Caco-2 (cell line): ENCODE measurements at regions of chr15 and their contacts with region 1.

Region 1: DNA sequence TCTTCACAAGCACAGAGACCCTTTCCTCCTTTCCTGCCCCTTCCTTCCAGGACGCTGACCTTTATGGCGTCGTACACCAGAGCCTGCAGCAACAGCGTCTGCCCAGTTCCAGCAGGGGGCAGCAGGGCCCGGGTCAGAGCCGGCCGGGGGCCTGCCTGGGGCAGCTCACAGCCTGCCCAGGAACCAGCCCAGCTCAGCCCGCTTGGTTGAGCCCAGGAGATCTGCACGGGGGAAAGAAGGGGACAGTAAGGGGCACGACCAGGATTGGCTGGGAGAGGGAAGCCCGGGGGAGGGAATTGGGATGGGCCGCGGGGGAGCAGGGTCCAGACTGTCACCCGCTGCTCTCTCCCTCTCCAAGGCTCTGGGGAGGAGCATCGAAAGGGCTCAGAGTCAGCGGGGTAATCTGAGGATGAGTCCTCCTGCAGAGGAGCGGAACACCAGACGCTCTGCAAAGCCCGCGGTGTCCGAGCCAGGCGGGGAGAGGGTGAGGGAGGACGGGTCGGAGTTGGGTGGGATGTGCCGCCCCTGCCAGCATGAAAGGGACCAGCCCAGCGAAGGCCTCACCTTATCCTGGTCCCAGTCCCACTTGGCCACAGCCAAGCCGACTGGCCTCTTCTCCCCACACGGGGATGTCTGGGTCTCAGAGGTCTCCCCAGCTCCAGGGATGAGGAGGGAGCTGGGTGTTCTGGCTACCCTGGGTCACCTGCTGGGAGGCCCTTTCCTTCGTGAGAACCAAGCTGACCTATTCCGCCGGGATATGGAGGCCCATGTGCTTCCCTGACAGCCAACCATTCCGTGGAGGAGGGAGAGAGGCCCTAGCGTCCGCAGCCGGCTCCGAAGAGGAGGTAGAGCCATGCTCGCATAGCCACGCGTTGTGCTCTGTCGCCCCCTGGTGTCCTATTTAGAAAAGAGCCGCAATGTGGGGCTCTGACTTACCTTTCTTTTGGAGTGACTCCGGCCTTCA is 7.4 kb upstream of the IGDCC3 start:
- DNase-seq: peak; percentile 85 to 90
- H3K4me3 ChIP-seq: peak overlapping the region; percentile 25
- H3K4me3 Mint-ChIP-seq: peak overlapping the region; percentile 72
- H3K27ac Mint-ChIP-seq: peak overlapping the region; percentile 83
- H3K4me1 ChIP-seq: peaks cover 13% of the 10 kb centered on the region
- H3K4me1 Mint-ChIP-seq: peaks cover 27% of the 10 kb centered on the region
- H3K27me3 ChIP-seq: no peaks in the 10 kb centered on the region
- H3K27me3 Mint-ChIP-seq: no peaks in the 10 kb centered on the region
- CTCF ChIP-seq: peak; percentile 80 to 87

Region 2: DNA sequence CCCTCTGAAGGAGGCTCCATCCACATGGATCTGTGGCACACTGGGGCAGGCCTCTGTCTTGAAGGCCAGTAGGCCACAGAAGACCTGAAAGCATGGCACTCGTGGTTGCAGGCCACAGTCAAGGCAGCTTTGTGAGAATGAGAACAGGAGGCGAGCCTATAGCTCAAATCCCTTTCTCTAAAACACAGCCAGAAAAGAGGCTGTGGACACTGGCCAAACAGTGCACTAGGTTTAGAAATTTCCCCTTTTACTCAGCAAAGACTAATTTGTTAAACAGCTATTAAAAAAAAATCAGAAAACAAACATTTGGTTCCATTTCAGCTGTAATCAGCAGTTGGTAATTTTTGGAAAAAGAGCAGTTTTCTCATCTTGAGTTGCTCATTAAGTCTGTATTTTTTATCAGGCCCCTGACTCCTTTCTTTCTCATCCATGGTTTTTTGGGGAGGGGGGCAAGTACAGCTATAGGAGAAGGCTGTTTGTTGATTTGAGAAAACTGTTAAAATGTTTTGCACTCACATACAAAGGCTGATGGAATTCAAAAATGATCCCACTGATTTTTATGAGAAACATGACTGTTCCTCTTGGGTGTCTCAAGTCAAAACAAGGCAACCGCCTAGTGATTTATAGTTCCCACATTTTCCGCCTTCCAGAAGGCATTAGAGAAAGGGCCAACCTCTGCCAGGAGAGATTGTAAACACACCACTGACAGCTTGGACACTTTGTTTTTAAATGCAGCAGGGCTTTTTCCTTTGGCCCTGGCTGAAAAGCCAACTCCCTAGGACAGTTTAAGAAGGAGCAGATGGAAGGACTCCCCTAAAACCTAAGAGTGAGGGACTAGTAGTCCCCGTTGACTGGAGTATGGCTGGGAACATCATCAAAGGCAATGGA is 126.6 kb before region 1 on chr15:
- CTCF ChIA-PET with region 1: no interaction called
- POLR2A ChIA-PET with region 1: no interaction called
- intact Hi-C with region 1: no loop called
- DNase-seq: no peak
- H3K4me3 ChIP-seq: no peak overlapping the region
- H3K4me3 Mint-ChIP-seq: no peak overlapping the region
- H3K27ac Mint-ChIP-seq: no peak overlapping the region
- H3K4me1 ChIP-seq: no peaks in the 10 kb centered on the region
- H3K4me1 Mint-ChIP-seq: no peaks in the 10 kb centered on the region
- H3K27me3 ChIP-seq: no peaks in the 10 kb centered on the region
- H3K27me3 Mint-ChIP-seq: no peaks in the 10 kb centered on the region
- CTCF ChIP-seq: no peak

Region 3: DNA sequence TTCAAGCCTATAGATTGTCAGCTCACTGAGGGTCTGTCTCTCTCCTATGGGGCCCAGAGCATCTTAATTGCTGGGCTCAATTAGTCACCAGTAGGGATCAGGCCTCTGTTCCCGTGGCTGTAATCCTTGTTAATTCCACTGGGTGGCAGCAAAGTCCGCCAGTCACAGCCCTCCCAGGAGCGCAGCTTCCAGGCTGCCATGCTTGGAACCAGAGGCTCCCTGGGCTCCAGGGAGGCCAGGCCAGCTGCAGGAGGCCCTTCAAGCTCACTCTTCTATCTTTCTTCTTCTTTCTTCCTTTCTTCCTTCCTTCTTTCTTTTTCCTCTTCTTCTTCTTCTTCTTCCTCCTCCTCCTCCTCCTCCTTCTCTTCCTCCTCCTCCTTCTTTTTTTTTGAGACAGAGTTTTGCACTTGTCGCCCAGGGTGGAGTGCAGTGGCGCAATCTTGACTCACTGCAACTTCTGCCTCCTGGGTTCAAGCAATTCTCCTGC is 66.3 kb before region 1 on chr15:
- CTCF ChIA-PET with region 1: interaction called, 23 read pairs
- POLR2A ChIA-PET with region 1: no interaction called
- intact Hi-C with region 1: loop called (anchors 1 kb)
- DNase-seq: peak; percentile 78 to 87
- H3K4me3 ChIP-seq: no peak overlapping the region
- H3K4me3 Mint-ChIP-seq: no peak overlapping the region
- H3K27ac Mint-ChIP-seq: no peak overlapping the region
- H3K4me1 ChIP-seq: no peaks in the 10 kb centered on the region
- H3K4me1 Mint-ChIP-seq: no peaks in the 10 kb centered on the region
- H3K27me3 ChIP-seq: no peaks in the 10 kb centered on the region
- H3K27me3 Mint-ChIP-seq: no peaks in the 10 kb centered on the region
- CTCF ChIP-seq: peak; percentile 71 to 91

Region 4: DNA sequence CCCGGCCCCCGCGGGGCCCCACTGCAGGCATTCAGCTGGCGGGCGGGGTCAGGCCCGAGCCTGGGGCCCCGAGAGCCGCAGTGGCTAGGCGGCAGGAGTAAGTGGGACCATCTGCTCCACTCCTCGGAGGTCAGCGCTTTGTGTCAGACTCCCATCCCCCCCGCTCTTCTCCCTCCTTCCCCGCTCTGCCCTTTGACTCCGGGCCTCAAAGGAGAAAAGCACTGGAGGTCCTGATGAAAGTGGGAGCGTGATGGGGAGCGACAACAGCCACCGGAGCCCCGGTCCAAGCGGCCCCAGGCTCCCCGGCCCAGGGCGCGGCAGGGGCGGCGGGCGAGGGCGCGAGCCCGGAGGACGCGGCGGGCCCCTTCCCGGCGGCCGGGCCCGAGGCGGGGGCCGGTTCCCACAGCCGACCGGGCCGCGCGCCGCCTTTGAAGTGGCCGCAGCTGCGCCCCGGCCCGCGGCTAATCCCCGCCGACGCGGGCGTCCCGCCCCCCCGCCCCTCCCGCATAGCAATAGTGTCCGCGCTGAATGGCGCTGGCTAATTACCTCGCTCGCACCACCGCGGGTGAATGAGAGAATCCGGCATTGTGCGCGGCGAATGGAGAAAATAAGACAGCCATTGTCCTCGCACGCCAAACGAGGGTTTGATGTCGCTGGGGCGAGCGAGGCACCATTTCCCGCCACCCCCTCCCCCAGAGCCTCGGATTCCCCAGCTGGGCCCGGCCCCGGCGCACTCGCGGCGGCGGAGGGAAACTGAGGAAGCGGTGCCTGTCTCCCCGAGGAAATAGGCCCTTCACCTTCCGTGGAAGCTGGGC is 29.8 kb before region 1 on chr15:
- CTCF ChIA-PET with region 1: no interaction called
- POLR2A ChIA-PET with region 1: no interaction called
- intact Hi-C with region 1: loop called (anchors 2 kb)
- DNase-seq: peak; percentile 74 to 77
- H3K4me3 ChIP-seq: peak overlapping the region; percentile 85
- H3K4me3 Mint-ChIP-seq: peak overlapping the region; percentile 75
- H3K27ac Mint-ChIP-seq: peak overlapping the region; percentile 86
- H3K4me1 ChIP-seq: peaks cover 20% of the 10 kb centered on the region
- H3K4me1 Mint-ChIP-seq: peaks cover 17% of the 10 kb centered on the region
- H3K27me3 ChIP-seq: no peaks in the 10 kb centered on the region
- H3K27me3 Mint-ChIP-seq: no peaks in the 10 kb centered on the region
- CTCF ChIP-seq: no peak